ENCODE measurements at regions of chr7 and their contacts with region 1.

Region 1: GRCh38 chr7:112080441-112080840 is 125.8 kb downstream of the DOCK4 start:
- DNase-seq: no peak
- ATAC-seq: peak in 7 of 8 donors; percentile 37 to 78 (median 75)
- H3K4me3 ChIP-seq: peak overlapping the region in 2 of 10 donors; percentile 6 to 11
- H3K27ac ChIP-seq: peak overlapping the region in 6 of 10 donors; percentile 23 to 90 (median 57)
- H3K4me1 ChIP-seq: peaks cover 0 to 71% (median 37%) of the 10 kb centered on the region in 9 donors
- H3K27me3 ChIP-seq: no peaks in the 10 kb centered on the region
- CTCF ChIP-seq: no peak

Region 2: DNA sequence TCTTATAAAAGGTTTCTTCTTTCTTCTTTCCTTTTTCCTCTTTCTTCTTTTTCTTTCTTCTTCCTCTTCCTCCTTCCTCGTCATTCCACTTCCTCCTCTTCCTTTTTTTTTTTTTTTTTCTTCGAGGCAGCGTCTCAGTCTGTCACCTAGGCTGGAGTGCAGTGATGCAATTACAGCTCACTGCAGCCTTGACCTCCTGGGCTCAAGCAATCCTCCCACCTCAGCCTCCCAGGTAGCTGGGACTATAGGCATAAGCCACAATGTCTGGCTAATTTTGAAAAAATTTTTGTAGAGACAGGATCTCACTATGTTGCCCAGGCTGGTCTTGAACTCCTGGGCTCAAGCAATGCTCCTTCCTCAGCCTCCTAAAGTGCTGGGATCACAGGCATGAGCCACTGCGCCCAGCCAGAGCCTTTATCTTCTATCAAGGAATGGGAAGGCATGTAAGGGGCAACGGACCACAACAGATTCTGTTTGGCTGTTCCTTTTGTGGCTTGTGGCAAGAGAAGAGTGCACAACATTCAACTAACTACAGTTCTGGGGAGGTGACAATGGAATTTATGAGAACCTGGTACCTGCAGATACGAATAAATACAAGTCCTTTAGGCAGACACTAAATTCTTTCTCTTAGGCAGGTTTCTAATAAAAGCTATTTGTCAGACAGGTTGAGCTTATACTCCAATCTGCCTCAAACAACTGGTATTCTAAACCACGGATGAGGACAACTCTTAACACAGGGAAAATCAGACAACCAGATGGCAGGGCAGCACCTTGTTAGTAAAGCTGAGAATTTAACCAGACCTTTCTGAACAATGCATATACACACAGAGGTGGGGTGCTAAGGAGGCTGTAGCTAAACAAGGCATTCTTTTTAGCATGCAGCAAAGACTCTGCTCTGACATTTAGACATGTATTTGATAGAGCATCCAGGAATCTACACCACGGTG is 25.4 kb after region 1 on chr7:
- intact Hi-C with region 1: loop called in 1 of 10 experiments (anchors 1 kb)
- DNase-seq: no peak
- ATAC-seq: peak in 1 of 8 donors; percentile 24
- H3K4me3 ChIP-seq: no peak overlapping the region
- H3K27ac ChIP-seq: no peak overlapping the region
- H3K4me1 ChIP-seq: peaks cover 2 to 65% (median 45%) of the 10 kb centered on the region in 9 donors
- H3K27me3 ChIP-seq: no peaks in the 10 kb centered on the region
- CTCF ChIP-seq: no peak

Region 3: GRCh38 chr7:112302566-112302965 is 222.1 kb after region 1 on chr7:
- intact Hi-C with region 1: loop called in 1 of 10 experiments (anchors 5 kb)
- DNase-seq: no peak
- ATAC-seq: no peak
- H3K4me3 ChIP-seq: no peak overlapping the region
- H3K27ac ChIP-seq: no peak overlapping the region
- H3K4me1 ChIP-seq: peaks cover 0 to 6% (median 0%) of the 10 kb centered on the region in 9 donors
- H3K27me3 ChIP-seq: no peaks in the 10 kb centered on the region
- CTCF ChIP-seq: no peak

Measured in heart right ventricle (tissue), 16 donors.